PC-9 (cell line): ENCODE measurements at regions of chr7 and their contacts with region 1.

Region 1: DNA sequence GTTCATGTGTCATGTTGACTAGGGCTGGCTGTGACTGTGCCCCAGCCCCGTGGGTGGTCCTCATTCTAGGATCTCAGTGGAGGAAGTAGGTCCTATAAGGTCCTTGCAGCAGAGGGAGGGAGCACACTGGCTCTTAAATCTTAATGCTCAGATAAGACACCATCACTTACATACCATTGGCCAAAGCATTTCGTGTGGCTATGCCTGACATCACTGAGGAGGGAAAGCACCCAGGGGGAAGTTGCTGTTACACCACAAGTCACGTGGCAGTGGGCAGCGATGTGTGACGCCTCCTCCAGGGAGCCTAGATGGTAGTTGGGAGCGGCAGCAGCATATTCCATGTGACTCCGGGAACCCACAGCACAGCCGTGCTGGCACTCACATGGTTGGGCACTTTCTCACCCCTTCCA is 224.7 kb upstream of the SH2B2 start:
- DNase-seq: no peak
- H3K4me3 ChIP-seq: no peak overlapping the region
- H3K27ac ChIP-seq: no peak overlapping the region
- H3K4me1 ChIP-seq: peaks cover 11% of the 10 kb centered on the region
- H3K27me3 ChIP-seq: no peaks in the 10 kb centered on the region
- CTCF ChIP-seq: no peak

Region 2: GRCh38 chr7:101826081-101826835 is 235.7 kb before region 1 on chr7:
- CTCF ChIA-PET with region 1: no interaction called
- POLR2A ChIA-PET with region 1: interaction called, 10 read pairs
- intact Hi-C with region 1: no loop called
- DNase-seq: no peak
- H3K4me3 ChIP-seq: no peak overlapping the region
- H3K27ac ChIP-seq: no peak overlapping the region
- H3K4me1 ChIP-seq: no peaks in the 10 kb centered on the region
- H3K27me3 ChIP-seq: no peaks in the 10 kb centered on the region
- CTCF ChIP-seq: no peak

Region 3: DNA sequence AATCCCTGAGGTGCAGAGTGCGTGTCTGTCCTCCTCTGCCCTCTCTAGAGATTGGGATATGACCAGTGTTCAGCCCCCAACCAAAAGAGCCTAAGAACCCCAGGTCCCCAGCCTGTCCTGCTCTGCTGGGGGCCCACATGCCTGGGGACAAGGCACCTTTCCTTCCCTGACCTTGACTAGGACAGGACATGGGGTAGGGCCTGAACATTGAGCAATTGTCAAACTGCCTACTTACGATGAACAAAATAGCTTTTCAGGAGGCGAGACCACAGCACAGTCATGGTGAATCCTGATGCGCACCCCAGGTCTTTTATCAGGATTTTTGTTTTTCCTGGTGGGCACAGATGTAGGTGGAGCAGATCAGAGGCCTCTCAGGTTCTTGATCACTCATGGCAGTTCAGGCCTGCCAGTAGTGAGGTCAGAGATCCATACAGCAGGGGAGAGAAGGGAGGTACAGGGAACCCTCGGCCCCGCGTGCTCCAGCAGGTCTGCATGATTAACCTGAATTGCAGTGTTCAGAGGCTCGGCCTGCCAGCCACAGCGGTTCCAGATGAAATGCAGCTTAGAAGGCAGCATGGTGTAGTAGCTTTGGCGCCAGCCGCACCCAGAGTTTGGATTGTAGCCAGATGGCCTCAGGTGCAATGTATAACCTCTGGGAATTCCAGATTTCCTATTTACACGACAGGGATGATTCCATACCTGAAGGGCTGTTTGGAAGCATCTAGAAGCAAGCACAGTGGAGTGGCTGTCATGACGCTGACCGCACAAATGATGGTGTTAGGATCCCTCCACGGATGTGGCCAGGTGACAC is 53.2 kb before region 1 on chr7:
- CTCF ChIA-PET with region 1: no interaction called
- POLR2A ChIA-PET with region 1: no interaction called
- intact Hi-C with region 1: loop called (anchors 10 kb)
- DNase-seq: peak in 1 of 2 experiments; percentile 79
- H3K4me3 ChIP-seq: no peak overlapping the region
- H3K27ac ChIP-seq: no peak overlapping the region
- H3K4me1 ChIP-seq: no peaks in the 10 kb centered on the region
- H3K27me3 ChIP-seq: no peaks in the 10 kb centered on the region
- CTCF ChIP-seq: no peak